CD8-positive, alpha-beta T cell (primary cell): ENCODE measurements at regions of chr9 and their contacts with region 1.

Region 1: GRCh38 chr9:131197160-131197911 is 72.0 kb downstream of the NUP214 start:
- DNase-seq: peak in 1 of 9 experiments; percentile 14
- ATAC-seq: no peak
- H3K4me3 ChIP-seq: no peak overlapping the region
- H3K4me3 Mint-ChIP-seq: no peak overlapping the region
- H3K27ac ChIP-seq: no peak overlapping the region
- H3K27ac Mint-ChIP-seq: no peak overlapping the region
- H3K4me1 ChIP-seq: no peaks in the 10 kb centered on the region
- H3K4me1 Mint-ChIP-seq: peaks cover 3% of the 10 kb centered on the region
- H3K27me3 ChIP-seq: no peaks in the 10 kb centered on the region
- H3K27me3 Mint-ChIP-seq: no peaks in the 10 kb centered on the region
- CTCF ChIP-seq: no peak

Region 2: DNA sequence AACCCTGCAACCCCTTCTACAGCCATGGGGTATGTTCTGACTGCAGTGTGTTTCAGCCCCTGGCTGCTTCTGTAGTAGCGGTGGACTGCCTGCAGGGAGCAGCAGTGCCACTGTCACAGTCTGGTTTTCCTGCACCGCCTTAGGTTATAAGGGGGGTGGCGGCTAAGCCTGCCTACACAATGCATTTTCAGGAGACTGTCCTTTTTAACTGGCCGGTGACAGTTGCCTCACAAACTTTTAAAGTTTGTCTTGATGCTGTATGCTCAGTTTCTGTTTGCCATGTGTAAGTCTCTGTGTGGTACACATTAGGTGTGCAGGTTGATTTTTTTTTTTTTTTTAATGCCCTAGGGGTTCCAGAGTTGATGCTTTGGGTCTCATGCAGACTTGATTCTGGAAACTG is 19.0 kb before region 1 on chr9:
- CTCF ChIA-PET with region 1: interaction called, 11 read pairs
- POLR2A ChIA-PET with region 1: no interaction called
- intact Hi-C with region 1: no loop called
- DNase-seq: peak; percentile 65 to 86 (median 77)
- ATAC-seq: peak; percentile 100
- H3K4me3 ChIP-seq: no peak overlapping the region
- H3K4me3 Mint-ChIP-seq: no peak overlapping the region
- H3K27ac ChIP-seq: no peak overlapping the region
- H3K27ac Mint-ChIP-seq: no peak overlapping the region
- H3K4me1 ChIP-seq: no peaks in the 10 kb centered on the region
- H3K4me1 Mint-ChIP-seq: peaks cover 12% of the 10 kb centered on the region
- H3K27me3 ChIP-seq: no peaks in the 10 kb centered on the region
- H3K27me3 Mint-ChIP-seq: no peaks in the 10 kb centered on the region
- CTCF ChIP-seq: peak; percentile 99